ENCODE measurements at regions of chr20 and their contacts with region 1.

Region 1: DNA sequence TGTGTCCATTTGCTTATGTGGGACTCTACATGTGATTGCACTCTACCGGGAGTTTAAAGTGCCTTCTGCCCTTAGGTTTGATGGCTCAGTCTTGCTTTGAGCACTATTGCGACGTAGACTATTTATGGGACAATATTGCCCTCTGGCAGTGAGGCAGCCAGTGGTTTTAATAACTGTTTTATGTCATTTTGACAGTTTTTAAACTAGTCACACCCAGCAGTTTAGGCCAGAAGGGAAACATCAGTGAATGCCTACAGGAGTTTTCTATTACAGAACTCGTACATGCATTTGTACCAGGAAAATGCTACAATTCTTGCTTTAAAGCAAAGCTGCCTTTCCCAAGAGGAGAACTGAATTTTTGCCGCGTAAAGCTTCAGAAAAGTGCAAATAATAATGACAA is 813.7 kb downstream of the KIF16B start:
- DNase-seq: peak; percentile 5
- H3K4me3 Mint-ChIP-seq: no peak overlapping the region
- H3K27ac Mint-ChIP-seq: no peak overlapping the region
- H3K4me1 Mint-ChIP-seq: peaks cover 5% of the 10 kb centered on the region
- H3K27me3 Mint-ChIP-seq: no peaks in the 10 kb centered on the region
- CTCF ChIP-seq: no peak

Region 2: GRCh38 chr20:15265581-15266309 is 493.8 kb before region 1 on chr20:
- CTCF ChIA-PET with region 1: interaction called, 3 read pairs
- POLR2A ChIA-PET with region 1: no interaction called
- intact Hi-C with region 1: loop called (anchors 5 kb)
- DNase-seq: no peak
- H3K4me3 Mint-ChIP-seq: no peak overlapping the region
- H3K27ac Mint-ChIP-seq: no peak overlapping the region
- H3K4me1 Mint-ChIP-seq: no peaks in the 10 kb centered on the region
- H3K27me3 Mint-ChIP-seq: no peaks in the 10 kb centered on the region
- CTCF ChIP-seq: no peak

Region 3: GRCh38 chr20:15654208-15654645 is 105.4 kb before region 1 on chr20:
- CTCF ChIA-PET with region 1: no interaction called
- POLR2A ChIA-PET with region 1: no interaction called
- intact Hi-C with region 1: loop called (anchors 10 kb)
- DNase-seq: peak; percentile 64
- H3K4me3 Mint-ChIP-seq: no peak overlapping the region
- H3K27ac Mint-ChIP-seq: no peak overlapping the region
- H3K4me1 Mint-ChIP-seq: no peaks in the 10 kb centered on the region
- H3K27me3 Mint-ChIP-seq: no peaks in the 10 kb centered on the region
- CTCF ChIP-seq: peak; percentile 67

Region 4: GRCh38 chr20:15739056-15739455 is 20.5 kb before region 1 on chr20:
- CTCF ChIA-PET with region 1: no interaction called
- POLR2A ChIA-PET with region 1: no interaction called
- intact Hi-C with region 1: no loop called
- DNase-seq: no peak
- H3K4me3 Mint-ChIP-seq: no peak overlapping the region
- H3K27ac Mint-ChIP-seq: no peak overlapping the region
- H3K4me1 Mint-ChIP-seq: no peaks in the 10 kb centered on the region
- H3K27me3 Mint-ChIP-seq: no peaks in the 10 kb centered on the region
- CTCF ChIP-seq: no peak